Activated B cell treated with CpG ODN at 0.5 μM for 24 hours (primary cell): ENCODE measurements at regions of chr5 and their contacts with region 1.

Region 1: DNA sequence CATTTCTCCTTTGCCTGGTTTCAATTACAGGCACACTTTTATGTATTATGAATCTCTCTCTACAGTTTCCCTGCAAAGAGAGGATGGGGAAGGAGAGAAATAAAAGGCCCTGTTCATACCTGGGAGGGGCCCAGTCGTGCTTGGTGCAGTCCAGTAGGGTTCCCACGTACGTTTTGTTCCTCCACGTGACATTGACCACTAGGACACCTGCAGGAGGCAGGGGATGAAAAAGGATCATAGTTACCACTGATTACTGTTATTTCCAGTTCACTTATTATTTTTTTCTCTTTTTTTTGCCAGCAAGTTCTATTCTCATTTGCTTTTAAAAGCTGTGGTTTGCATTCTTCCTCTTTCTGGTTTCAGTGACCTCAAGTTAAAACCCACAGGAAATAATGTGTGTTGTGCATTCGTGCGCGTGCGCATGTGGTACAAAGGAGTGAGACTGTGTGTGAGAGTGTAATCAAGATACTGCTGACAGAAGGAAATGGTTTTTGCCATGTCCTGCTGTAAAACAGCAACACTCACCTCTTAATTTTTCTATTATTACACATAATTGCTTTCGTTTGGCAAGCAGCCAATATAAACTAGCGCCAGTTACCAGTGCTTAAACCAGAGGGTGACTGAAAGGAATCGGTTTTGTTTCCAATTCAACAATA is 96.8 kb downstream of the ZNF608 start:
- DNase-seq: peak; percentile 70
- ATAC-seq: peak; percentile 76
- H3K4me3 Mint-ChIP-seq: peak overlapping the region; percentile 66
- H3K27ac Mint-ChIP-seq: peak overlapping the region; percentile 84
- H3K4me1 Mint-ChIP-seq: peaks cover 78% of the 10 kb centered on the region
- H3K27me3 Mint-ChIP-seq: no peaks in the 10 kb centered on the region
- CTCF ChIP-seq: no peak

Region 2: DNA sequence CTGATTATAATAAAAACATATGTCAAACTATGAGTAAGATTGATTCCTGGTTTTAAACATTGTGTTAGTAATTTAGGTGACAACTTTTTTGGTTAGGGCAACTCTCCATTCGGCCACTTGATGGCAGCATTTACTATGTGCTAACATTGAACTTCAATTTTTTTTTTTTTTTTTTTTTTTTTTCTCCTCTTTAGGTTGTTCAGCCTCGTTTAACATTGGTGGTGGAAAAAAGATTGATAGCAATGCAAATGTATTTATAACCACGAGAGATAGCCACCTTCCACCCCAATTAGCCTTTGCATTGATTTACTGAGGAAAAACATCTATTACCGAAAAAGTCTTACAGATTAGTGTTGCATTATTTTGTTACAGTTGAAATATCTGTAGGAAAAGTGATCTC is 978.6 kb before region 1 on chr5:
- CTCF ChIA-PET with region 1: no interaction called
- POLR2A ChIA-PET with region 1: no interaction called
- intact Hi-C with region 1: loop called (anchors 2 kb)
- DNase-seq: no peak
- ATAC-seq: peak; percentile 37
- H3K4me3 Mint-ChIP-seq: no peak overlapping the region
- H3K27ac Mint-ChIP-seq: no peak overlapping the region
- H3K4me1 Mint-ChIP-seq: peaks cover 3% of the 10 kb centered on the region
- H3K27me3 Mint-ChIP-seq: no peaks in the 10 kb centered on the region
- CTCF ChIP-seq: peak; percentile 92

Region 3: GRCh38 chr5:124056991-124057723 is 592.5 kb before region 1 on chr5:
- CTCF ChIA-PET with region 1: no interaction called
- POLR2A ChIA-PET with region 1: interaction called, 3 read pairs
- intact Hi-C with region 1: loop called (anchors 1 kb)
- DNase-seq: peak; percentile 59
- ATAC-seq: peak; percentile 85
- H3K4me3 Mint-ChIP-seq: peak overlapping the region; percentile 82
- H3K27ac Mint-ChIP-seq: peak overlapping the region; percentile 90
- H3K4me1 Mint-ChIP-seq: peaks cover 57% of the 10 kb centered on the region
- H3K27me3 Mint-ChIP-seq: no peaks in the 10 kb centered on the region
- CTCF ChIP-seq: no peak

Region 4: GRCh38 chr5:124524552-124525232 is 124.9 kb before region 1 on chr5:
- CTCF ChIA-PET with region 1: interaction called, 5 read pairs
- POLR2A ChIA-PET with region 1: no interaction called
- intact Hi-C with region 1: loop called (anchors 1 kb)
- DNase-seq: no peak
- ATAC-seq: peak; percentile 92
- H3K4me3 Mint-ChIP-seq: no peak overlapping the region
- H3K27ac Mint-ChIP-seq: peak overlapping the region; percentile 3
- H3K4me1 Mint-ChIP-seq: peaks cover 35% of the 10 kb centered on the region
- H3K27me3 Mint-ChIP-seq: peaks cover 9% of the 10 kb centered on the region
- CTCF ChIP-seq: no peak

Region 5: DNA sequence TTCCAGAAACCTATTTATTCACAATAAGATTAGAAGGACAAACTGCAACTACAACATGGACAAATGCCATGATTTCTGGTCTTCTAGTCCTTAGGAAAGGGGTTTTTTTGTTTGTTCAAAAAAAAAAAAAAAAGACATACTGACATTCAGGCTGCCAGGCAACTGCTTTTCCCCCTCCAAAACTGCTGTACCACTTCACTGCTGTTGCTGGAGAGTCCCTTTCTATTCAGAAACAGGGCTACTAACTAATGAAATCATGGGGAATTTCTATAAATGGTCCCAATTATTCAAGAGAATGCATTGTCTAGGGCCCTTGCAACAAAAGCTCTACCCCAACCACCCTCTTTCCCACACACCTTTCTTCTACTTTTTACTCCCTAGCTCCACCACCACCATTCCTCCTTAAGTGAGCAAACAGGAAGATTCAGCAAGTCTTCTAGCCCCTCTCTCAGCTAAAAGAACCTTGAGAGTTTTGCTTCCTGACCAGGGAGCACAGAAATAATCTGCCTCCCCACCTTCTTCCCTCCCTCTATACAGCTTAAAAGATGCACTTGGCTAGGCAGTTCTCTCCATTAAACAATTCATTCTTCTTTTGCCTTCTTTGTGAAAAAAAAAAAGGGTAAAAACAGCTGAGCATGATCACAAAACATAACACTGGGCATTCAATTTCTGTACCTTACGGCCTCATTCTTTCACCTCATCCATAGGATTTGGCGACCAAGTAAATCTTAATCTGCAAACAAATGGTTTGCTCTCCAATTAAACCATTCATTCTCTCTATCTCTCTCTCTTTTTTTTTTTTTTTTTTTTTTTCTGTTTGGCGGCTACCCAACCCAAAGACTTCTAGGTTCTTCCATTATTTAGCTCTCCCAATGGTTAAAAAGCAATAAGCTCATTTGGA is 83.1 kb after region 1 on chr5:
- CTCF ChIA-PET with region 1: no interaction called
- POLR2A ChIA-PET with region 1: no interaction called
- intact Hi-C with region 1: no loop called
- DNase-seq: no peak
- ATAC-seq: no peak
- H3K4me3 Mint-ChIP-seq: peak overlapping the region; percentile 8
- H3K27ac Mint-ChIP-seq: peak overlapping the region; percentile 4
- H3K4me1 Mint-ChIP-seq: peaks cover 74% of the 10 kb centered on the region
- H3K27me3 Mint-ChIP-seq: no peaks in the 10 kb centered on the region
- CTCF ChIP-seq: no peak

Region 6: GRCh38 chr5:124790895-124791732 is 141.5 kb after region 1 on chr5:
- CTCF ChIA-PET with region 1: no interaction called
- POLR2A ChIA-PET with region 1: interaction called, 10 read pairs
- intact Hi-C with region 1: no loop called
- DNase-seq: no peak
- ATAC-seq: no peak
- H3K4me3 Mint-ChIP-seq: no peak overlapping the region
- H3K27ac Mint-ChIP-seq: no peak overlapping the region
- H3K4me1 Mint-ChIP-seq: peaks cover 4% of the 10 kb centered on the region
- H3K27me3 Mint-ChIP-seq: no peaks in the 10 kb centered on the region
- CTCF ChIP-seq: no peak

Region 7: DNA sequence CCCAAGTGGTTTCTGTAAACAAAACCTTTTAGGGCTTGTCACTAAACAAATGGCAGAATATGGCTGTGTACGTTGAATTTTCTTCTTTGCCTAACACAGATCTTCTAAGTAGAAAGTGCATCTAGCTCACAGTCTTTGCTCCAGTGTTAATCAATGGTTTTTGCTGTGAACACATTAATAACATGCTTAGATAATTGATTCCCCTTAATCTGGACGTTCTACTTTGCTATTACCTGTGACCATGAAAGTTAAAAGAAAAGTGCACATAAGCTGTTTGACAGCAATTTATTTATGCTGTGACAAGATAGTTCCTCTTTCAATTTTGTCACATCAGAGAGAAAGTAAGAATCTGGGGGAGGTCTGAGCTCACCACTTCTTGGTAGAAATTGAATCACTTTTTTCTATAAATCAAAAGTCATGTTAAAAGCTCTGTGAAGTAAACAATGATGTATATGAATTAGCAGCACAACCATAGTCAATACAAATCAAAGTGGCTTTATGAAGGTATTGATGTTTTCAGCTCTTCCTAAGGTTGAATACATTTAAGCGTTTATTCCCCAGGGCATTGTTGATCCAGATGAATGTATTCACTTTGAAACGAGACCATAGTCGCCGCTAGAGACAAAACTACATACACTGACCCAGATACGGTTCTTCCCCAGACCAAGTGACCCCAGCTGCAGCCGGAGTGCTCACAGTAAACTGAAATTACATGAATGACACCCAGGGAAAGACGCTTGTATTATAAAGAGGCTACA is 271.5 kb after region 1 on chr5:
- CTCF ChIA-PET with region 1: no interaction called
- POLR2A ChIA-PET with region 1: no interaction called
- intact Hi-C with region 1: loop called (anchors 5 kb)
- DNase-seq: no peak
- ATAC-seq: peak; percentile 83
- H3K4me3 Mint-ChIP-seq: no peak overlapping the region
- H3K27ac Mint-ChIP-seq: no peak overlapping the region
- H3K4me1 Mint-ChIP-seq: peaks cover 10% of the 10 kb centered on the region
- H3K27me3 Mint-ChIP-seq: no peaks in the 10 kb centered on the region
- CTCF ChIP-seq: no peak

Region 8: DNA sequence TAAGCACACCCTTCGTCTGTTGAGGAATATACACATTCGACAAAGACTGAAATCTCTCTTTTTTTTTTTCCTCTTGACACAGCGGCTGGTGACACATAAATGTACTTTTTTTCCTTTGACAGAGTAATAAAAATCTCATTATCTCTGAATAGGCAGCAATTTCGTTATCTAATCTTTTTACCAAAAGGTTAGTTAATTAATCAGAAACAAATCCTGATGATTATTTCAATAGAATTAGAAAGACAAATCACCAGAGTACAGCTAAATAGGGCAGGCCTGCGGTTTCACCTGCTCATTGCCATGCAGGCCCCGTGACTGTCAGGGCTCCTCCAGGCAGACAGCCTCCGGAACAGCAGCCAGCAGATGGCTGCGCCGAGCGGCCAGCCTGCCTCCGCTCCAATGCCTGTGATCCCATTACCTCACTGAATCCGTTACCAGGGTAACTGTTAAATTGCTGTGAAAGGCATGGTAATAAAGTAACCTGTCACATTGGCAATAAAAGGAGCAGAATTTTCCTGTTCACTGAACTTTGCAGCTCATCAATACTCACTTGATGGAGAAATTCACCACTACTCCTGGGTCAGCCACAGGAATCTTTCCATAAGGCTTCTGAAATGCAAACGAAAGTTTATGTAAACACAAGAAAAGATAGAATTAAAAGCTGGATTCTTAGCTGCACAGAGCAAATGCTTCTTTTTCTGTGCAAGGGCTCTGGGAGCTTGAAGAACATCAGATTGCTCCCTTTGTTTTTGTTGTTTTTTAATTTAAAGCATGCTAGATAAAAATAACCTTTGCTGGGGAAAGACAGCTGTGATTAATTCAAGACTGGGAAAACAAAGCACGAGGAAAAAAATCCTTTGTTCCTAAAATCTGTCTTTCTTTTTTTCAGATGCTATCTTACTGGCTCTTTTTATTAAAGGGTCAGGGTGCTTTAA is 763.2 kb after region 1 on chr5:
- CTCF ChIA-PET with region 1: no interaction called
- POLR2A ChIA-PET with region 1: no interaction called
- intact Hi-C with region 1: loop called (anchors 5 kb)
- DNase-seq: peak; percentile 18
- ATAC-seq: peak; percentile 72
- H3K4me3 Mint-ChIP-seq: peak overlapping the region; percentile 29
- H3K27ac Mint-ChIP-seq: no peak overlapping the region
- H3K4me1 Mint-ChIP-seq: peaks cover 38% of the 10 kb centered on the region
- H3K27me3 Mint-ChIP-seq: no peaks in the 10 kb centered on the region
- CTCF ChIP-seq: no peak